Colonic mucosa (tissue), 4 donors: ENCODE measurements at regions of chr11 and their contacts with region 1.

Region 1: GRCh38 chr11:124953753-124954589 is at the start of gene CCDC15:
- DNase-seq: peak; percentile 99
- H3K4me3 ChIP-seq: peak within 1 kb of the TSS; percentile 71
- H3K27ac ChIP-seq: peak within 1 kb of the TSS; percentile 68
- H3K4me1 ChIP-seq: no peaks in the 10 kb centered on the region
- H3K27me3 ChIP-seq: no peaks in the 10 kb centered on the region
- CTCF ChIP-seq: no peak
- total RNA-seq, gene CCDC15: 1.2 to 2.5 TPM

Region 2: DNA sequence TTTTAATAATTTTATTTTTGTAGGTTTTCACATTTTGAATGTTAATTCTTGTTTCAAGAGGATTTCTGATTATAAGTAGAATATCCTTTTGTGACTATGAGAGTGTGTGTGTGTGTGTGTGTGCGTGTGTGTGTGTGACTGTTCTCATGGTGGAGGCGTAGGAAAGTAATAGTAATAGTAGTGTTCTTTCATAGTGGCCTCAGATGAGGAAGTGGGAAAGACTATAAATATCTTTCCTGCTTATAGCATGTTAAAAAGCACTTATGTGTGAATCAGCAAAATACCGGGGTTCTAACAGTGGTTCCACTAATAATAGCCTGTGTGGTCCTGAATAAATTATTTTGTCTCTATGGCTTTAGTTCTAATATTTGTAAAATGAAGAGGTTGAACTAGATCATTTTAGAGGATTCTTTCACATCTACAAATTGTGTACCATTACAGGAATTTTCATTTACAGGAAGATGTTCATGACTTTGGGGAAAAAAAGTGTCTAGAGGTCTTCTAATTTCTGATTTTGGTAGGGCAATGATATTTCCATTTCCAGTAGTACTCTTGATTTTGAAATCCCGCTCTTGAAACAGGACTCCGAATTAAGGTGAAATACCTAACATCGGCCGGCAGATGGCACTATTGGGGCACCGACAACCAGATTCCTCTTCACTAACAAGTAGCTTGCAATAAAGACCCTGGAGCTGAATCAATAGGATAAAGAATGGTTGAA is 882.9 kb before region 1 on chr11:
- intact Hi-C with region 1: no loop called
- DNase-seq: peak; percentile 70
- H3K4me3 ChIP-seq: no peak overlapping the region
- H3K27ac ChIP-seq: no peak overlapping the region
- H3K4me1 ChIP-seq: peaks cover 3% of the 10 kb centered on the region
- H3K27me3 ChIP-seq: no peaks in the 10 kb centered on the region
- CTCF ChIP-seq: peak; percentile 64

Region 3: DNA sequence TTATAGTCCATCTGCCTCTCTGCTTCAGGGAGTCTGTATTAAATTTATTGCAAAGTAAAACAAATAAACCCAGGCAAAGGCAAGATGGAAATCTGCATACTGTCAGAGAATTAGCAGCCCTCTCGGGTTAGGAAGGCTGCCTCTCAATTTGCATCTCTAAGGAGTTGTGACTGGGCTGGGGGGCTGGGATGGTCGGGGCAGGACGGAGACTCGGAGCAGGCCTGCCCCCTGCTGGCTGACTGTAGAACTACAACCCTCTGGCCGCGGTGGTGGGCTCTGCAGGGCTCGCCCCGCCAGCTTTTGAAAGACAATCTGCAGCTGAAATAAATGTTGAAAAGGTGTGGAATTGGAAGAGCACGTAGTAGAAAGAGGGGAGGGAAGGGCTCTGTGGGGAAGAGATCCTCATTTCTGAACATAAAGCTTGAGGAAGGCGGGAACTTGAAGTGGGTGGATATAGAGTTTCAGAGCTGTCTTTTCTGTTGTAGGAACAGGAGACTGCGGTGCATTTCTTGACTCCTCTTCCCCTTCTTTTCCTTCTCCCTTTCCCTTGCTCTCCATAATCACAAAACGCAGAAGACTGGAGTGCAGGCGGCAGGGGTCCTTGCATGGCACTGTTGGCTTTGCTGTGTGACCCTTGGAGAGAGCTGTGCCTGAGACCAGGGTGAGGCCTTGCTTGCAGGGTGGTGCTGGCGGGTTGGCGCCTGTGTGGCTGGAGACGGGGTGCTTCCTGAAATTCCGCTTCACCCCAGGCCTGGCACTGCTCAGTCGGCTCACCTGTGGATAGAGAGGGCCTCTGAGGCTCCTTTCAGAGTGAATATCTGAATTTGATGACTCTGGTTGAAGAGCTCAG is 187.9 kb after region 1 on chr11:
- intact Hi-C with region 1: loop called (anchors 5 kb)
- DNase-seq: no peak
- H3K4me3 ChIP-seq: no peak overlapping the region
- H3K27ac ChIP-seq: no peak overlapping the region
- H3K4me1 ChIP-seq: no peaks in the 10 kb centered on the region
- H3K27me3 ChIP-seq: no peaks in the 10 kb centered on the region
- CTCF ChIP-seq: peak; percentile 97

Region 4: DNA sequence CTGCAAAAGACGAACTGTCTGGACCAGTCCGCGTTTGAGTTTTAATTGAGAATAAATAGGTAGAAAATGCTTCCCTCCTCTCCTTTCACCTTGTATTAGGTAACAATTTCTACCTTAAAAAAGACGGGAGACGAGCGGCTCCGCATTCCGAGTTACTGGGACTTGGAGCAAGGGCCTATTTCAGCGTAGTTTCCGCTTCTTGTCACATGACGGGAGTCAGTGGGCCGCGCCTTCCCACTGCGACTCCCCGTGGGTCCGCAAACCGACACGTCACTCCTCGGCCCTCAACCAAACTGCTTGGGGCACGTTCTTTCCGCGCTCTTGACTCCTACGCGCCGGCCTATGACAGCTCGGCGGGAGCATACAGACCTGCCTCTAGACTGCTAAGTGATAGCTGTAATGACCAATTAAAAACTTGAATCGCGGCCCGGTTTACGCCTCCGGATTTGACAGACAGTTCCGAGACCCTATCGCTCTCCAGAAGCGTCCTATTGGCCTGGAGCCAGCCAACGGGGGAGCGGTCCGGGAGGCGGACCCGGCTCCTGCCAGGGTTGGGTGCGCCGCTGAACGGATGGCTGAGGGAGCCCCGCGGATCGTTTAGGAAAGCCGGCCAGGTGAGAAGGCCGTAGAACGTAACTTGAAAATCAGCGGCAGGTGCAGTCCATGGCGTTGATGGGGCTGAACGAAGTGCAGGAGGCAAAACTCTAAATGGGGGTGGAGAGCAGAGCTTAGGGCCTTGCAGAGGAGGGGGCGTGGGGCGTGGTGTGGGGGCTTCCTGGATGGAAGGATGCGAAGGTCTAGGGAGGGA is 638.5 kb after region 1 on chr11 and contains the start of gene STT3A:
- intact Hi-C with region 1: loop called (anchors 10 kb)
- DNase-seq: peak; percentile 99
- H3K4me3 ChIP-seq: peak within 1 kb of the TSS; percentile 78
- H3K27ac ChIP-seq: peak within 1 kb of the TSS; percentile 95
- H3K4me1 ChIP-seq: no peaks in the 10 kb centered on the region
- H3K27me3 ChIP-seq: no peaks in the 10 kb centered on the region
- CTCF ChIP-seq: no peak
- total RNA-seq, gene STT3A: 130 to 183 TPM